ENCODE measurements at regions of chr1 and their contacts with region 1.

Region 1: GRCh38 chr1:153990468-153991150 is at the start of gene RPS27:
- DNase-seq: peak; percentile 93
- H3K4me3 Mint-ChIP-seq: peak within 1 kb of the TSS; percentile 93
- H3K27ac Mint-ChIP-seq: peak within 1 kb of the TSS; percentile 97
- H3K4me1 Mint-ChIP-seq: peaks cover 47% of the 10 kb centered on the region
- H3K27me3 Mint-ChIP-seq: peaks cover 3% of the 10 kb centered on the region
- total RNA-seq, gene RPS27: 2,339 to 2,449 TPM

Region 2: DNA sequence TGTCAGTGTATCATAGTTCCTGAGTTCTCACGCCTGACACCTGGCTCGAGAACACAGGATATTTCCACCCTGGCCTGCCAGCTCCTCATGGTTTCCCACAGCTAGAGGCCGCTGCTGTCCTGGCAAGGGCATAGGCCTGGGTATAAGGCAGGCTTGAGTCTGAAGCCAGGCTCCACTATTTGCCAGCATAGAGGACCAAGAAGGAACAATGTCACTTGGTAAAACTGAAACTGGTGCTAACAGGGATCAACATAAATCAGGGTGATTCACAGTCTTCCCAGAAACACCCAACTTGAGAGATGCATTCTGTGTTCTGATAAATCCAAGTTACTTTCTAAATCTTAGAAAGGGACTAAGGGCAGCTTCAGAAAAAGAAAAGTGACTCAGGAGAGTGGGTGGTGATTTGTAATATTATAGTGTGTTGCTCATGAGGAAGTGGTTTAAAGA is 418.0 kb before region 1 on chr1:
- CTCF ChIA-PET with region 1: no interaction called
- intact Hi-C with region 1: loop called (anchors 2 kb)
- DNase-seq: peak; percentile 85
- H3K4me3 Mint-ChIP-seq: no peak overlapping the region
- H3K27ac Mint-ChIP-seq: peak overlapping the region; percentile 18
- H3K4me1 Mint-ChIP-seq: peaks cover 40% of the 10 kb centered on the region
- H3K27me3 Mint-ChIP-seq: peaks cover 1% of the 10 kb centered on the region

Region 3: DNA sequence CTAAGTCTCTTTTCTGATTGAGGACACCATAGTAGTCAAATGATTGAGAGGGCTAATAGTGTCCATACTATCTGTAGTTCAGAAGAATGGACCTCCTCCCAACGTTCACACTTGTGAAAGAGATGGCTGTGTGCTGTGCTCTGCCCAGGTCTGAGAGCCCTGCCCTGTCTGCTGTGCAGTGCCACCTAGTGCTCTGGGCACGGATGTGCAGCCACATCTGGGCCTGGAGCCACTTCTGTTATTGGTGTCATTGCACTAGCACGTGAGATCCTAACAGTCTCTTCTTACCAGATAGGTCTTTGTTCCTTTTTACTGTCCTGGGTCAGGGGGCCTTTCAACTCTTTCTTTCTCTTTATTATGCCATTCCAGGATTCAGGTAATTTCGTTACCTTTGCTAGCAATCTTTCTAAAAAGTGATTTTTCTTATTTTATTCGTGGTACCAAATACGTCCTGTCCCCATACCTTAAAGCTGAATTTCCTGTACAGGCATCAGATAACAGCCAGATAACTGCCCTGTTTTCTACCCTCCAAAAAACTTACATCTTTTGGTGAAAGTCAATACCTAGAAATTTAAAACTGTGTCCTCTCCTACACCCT is 241.1 kb before region 1 on chr1:
- CTCF ChIA-PET with region 1: no interaction called
- intact Hi-C with region 1: loop called (anchors 1 kb)
- DNase-seq: peak; percentile 90
- H3K4me3 Mint-ChIP-seq: no peak overlapping the region
- H3K27ac Mint-ChIP-seq: no peak overlapping the region
- H3K4me1 Mint-ChIP-seq: peaks cover 2% of the 10 kb centered on the region
- H3K27me3 Mint-ChIP-seq: no peaks in the 10 kb centered on the region

Region 4: GRCh38 chr1:153922972-153923925 is 67.4 kb before region 1 on chr1 and contains the start of gene GATAD2B:
- CTCF ChIA-PET with region 1: interaction called, 6 read pairs
- intact Hi-C with region 1: loop called (anchors 1 kb)
- DNase-seq: peak; percentile 100
- H3K4me3 Mint-ChIP-seq: peak within 1 kb of the TSS; percentile 81
- H3K27ac Mint-ChIP-seq: peak within 1 kb of the TSS; percentile 94
- H3K4me1 Mint-ChIP-seq: peaks cover 36% of the 10 kb centered on the region
- H3K27me3 Mint-ChIP-seq: no peaks in the 10 kb centered on the region
- total RNA-seq, gene GATAD2B: 69.0 to 70.2 TPM

Region 5: DNA sequence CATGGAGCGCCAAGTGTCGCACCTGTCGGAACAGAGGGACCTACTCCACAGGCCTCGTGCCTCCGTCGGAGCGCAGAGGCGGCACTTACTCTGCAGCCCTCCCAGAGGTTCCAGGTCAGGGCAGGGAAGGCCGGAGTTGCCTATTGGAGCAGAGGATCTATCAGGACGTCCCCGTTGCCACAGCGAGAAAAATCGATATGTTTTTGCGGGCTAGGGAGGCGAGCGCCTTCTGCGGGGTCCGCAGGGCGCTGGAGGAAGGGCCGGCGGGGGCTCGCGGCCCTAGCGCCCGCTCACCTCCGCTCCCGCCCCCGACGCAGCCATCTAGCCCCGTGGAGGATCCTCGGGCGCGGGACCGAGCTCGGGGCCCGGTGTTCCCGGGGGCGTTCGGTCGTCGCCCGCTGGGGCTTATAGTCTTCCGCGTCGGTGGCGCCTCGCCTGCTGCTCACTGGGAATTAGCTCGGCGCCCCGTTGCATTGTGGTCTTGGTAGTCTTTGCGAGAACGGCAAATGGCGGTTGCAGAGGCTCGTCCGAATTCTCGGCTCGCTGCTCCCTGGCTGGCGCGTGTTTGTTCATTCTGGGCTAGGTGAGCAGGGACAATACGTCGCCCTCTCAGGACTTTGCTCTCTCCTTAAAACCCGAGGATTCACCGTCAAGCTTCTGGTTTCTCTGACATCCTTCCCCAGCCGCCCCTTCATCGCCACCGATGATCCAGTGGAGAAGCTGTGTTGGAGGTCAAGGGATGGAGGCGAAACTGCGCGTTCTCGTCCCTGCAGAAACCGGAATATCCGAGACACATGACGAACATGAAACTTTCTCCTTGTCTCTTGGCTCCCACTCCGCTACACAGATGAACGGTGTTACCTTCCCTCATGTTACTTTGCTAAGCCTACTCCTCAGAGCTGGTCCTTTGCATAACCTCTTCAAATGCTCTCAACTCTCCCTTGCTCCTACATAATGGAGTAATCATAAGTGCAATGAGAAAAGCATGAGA is 13.1 kb before region 1 on chr1 and contains the start of gene JTB:
- CTCF ChIA-PET with region 1: interaction called, 27 read pairs
- intact Hi-C with region 1: loop called (anchors 1 kb)
- DNase-seq: peak; percentile 94
- H3K4me3 Mint-ChIP-seq: peak within 1 kb of the TSS; percentile 97
- H3K27ac Mint-ChIP-seq: peak within 1 kb of the TSS; percentile 95
- H3K4me1 Mint-ChIP-seq: peaks cover 37% of the 10 kb centered on the region
- H3K27me3 Mint-ChIP-seq: no peaks in the 10 kb centered on the region
- total RNA-seq, gene JTB: 126 to 131 TPM

Region 6: DNA sequence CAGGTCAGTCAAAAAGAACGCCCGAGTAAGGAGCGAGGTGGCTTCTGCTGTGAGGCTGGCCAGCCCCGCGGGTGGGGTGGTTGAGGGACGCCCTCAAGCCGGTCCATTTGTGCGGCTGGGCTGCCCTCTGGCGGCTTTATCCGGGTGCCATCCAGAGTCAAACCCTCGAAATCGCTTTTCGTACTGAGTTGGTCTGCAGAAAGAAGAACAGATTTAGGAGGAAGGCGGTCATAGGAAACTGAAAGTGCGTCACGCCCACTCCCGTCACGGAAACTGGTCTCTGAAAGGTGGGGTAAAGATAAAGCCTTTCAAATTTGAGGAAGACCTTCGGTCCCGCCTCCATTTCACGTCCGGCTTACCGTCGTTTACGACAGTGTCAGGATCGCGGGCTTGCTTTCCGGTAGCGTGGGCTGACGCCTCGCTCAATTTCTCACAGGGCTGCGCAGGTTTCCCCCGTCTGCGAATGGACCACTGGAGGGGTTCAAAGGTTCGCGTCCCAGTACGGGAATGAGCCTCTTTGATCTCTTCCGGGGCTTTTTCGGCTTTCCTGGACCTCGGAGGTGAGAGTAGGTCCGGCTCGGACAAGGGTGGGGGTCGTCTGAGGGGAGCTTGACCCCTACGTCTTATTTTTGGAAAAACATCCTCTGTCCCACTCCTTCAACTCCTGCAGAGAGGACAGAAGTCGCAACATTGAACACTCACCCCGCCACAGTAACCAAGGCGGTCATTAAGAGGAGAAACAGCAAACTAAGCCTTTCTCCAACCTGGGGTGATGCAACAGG is 281.8 kb after region 1 on chr1 and contains the start of gene HAX1:
- CTCF ChIA-PET with region 1: interaction called, 3 read pairs
- intact Hi-C with region 1: loop called (anchors 2 kb)
- DNase-seq: peak; percentile 99
- H3K4me3 Mint-ChIP-seq: peak within 1 kb of the TSS; percentile 98
- H3K27ac Mint-ChIP-seq: peak within 1 kb of the TSS; percentile 99
- H3K4me1 Mint-ChIP-seq: peaks cover 40% of the 10 kb centered on the region
- H3K27me3 Mint-ChIP-seq: no peaks in the 10 kb centered on the region
- total RNA-seq, gene HAX1: 204 to 219 TPM